Gastrocnemius medialis (tissue), 4 donors: ENCODE measurements at regions of chr17 and their contacts with region 1.

Region 1: GRCh38 chr17:40615295-40615988 is 32.2 kb downstream of the SMARCE1 start:
- DNase-seq: no peak
- ATAC-seq: no peak
- H3K4me3 ChIP-seq: no peak overlapping the region
- H3K27ac ChIP-seq: no peak overlapping the region
- H3K4me1 ChIP-seq: peaks cover 0 to 7% of the 10 kb centered on the region in 2 donors
- H3K27me3 ChIP-seq: peaks cover 29 to 36% (median 33%) of the 10 kb centered on the region in 3 donors
- CTCF ChIP-seq: peak in 2 of 5 experiments; percentile 25 to 34
- POLR2A ChIP-seq: no peak

Region 2: DNA sequence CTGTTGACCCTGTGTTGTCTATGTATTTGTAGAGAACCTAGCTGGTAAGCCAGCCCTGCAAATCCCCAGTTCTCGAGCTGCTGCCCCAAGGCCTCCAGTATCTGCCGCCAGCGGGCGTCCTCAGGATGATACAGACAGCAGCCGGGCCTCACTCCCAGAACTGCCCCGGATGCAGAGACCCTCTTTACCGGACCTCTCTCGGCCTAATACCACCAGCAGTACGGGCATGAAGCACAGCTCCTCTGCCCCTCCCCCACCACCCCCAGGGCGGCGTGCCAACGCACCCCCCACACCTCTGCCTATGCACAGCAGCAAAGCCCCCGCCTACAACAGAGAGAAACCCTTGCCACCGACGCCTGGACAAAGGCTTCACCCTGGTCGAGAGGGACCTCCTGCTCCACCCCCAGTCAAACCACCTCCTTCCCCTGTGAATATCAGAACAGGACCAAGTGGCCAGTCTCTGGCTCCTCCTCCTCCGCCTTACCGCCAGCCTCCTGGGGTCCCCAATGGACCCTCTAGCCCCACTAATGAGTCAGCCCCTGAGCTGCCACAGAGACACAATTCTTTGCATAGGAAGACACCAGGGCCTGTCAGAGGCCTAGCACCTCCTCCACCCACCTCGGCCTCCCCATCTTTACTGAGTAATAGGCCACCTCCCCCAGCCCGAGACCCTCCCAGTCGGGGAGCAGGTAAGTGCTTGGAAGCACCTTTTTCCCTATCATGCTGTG is 350.8 kb before region 1 on chr17:
- in situ Hi-C with region 1: no loop called
- intact Hi-C with region 1: no loop called
- DNase-seq: no peak
- ATAC-seq: no peak
- H3K4me3 ChIP-seq: no peak overlapping the region
- H3K27ac ChIP-seq: no peak overlapping the region
- H3K4me1 ChIP-seq: no peaks in the 10 kb centered on the region
- H3K27me3 ChIP-seq: no peaks in the 10 kb centered on the region
- CTCF ChIP-seq: no peak
- POLR2A ChIP-seq: no peak

Region 3: DNA sequence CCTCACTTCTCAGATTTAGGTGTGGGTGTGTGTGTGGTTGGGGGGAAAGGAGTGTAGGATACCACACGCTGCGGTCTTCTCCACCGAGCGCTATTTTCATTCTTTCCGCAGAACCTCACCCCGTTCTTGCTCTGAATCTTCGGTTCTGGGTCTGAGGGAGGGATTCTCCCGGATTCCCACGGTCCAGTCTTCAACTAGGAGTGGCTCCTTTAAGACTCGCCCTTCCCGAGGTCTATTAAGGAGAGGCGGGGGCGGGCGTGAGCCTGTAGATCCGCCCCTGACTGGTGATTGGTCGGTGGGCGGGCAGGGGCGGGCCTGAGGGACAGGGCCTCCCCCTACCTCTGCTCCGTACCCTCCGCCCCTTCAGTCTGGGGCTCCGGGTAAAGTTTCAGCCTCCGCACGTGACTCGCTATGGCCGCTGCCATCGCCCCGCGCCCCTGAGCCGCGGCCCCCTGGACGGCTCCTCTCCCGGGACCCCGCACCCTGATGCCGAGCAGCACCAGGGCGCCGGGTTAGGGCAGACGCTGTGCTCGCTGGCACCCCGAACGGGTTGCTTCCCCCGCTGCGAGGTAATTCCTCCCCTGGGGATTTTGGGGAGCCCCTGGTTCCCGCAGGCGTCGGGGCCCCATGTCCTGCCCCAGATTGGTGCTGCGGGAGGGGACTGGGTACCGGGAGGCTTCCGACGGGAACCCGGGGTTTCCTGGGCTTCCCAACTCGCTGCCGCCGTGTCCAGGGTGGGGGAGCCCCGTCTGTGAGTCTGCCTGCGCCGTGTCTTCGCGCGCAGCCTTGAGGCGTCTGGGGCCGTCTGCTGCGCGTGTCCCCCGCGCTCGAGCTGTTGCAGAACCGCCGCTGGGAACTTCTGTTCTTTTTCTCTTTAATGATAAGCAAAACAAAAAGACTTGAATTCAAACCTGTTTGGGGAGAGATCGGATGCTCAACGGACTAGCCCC is 297.3 kb before region 1 on chr17:
- in situ Hi-C with region 1: no loop called
- intact Hi-C with region 1: no loop called
- DNase-seq: peak; percentile 97 to 98
- ATAC-seq: peak; percentile 43 to 66
- H3K4me3 ChIP-seq: peak overlapping the region; percentile 82 to 100 (median 90)
- H3K27ac ChIP-seq: peak overlapping the region; percentile 95 to 100 (median 98)
- H3K4me1 ChIP-seq: peaks cover 76 to 89% of the 10 kb centered on the region in 2 donors
- H3K27me3 ChIP-seq: no peaks in the 10 kb centered on the region
- CTCF ChIP-seq: no peak
- POLR2A ChIP-seq: peak; percentile 98

Region 4: GRCh38 chr17:40726919-40727318 is 111.5 kb after region 1 on chr17:
- in situ Hi-C with region 1: no loop called
- intact Hi-C with region 1: loop called (anchors 1 kb)
- DNase-seq: no peak
- ATAC-seq: no peak
- H3K4me3 ChIP-seq: no peak overlapping the region
- H3K27ac ChIP-seq: no peak overlapping the region
- H3K4me1 ChIP-seq: no peaks in the 10 kb centered on the region
- H3K27me3 ChIP-seq: peaks cover 0 to 4% (median 0%) of the 10 kb centered on the region in 3 donors
- CTCF ChIP-seq: peak in 2 of 5 experiments; percentile 15 to 29
- POLR2A ChIP-seq: no peak

Region 5: GRCh38 chr17:40791787-40792436 is 176.5 kb after region 1 on chr17:
- in situ Hi-C with region 1: loop called in 3 of 4 experiments (anchors 10 kb)
- intact Hi-C with region 1: loop called (anchors 2 kb)
- DNase-seq: no peak
- ATAC-seq: no peak
- H3K4me3 ChIP-seq: no peak overlapping the region
- H3K27ac ChIP-seq: no peak overlapping the region
- H3K4me1 ChIP-seq: no peaks in the 10 kb centered on the region
- H3K27me3 ChIP-seq: peaks cover 3 to 23% (median 7%) of the 10 kb centered on the region in 3 donors
- CTCF ChIP-seq: peak in 4 of 5 experiments; percentile 7 to 47 (median 40)
- POLR2A ChIP-seq: no peak